Posterior cingulate gyrus (tissue), 11 donors: ENCODE measurements at regions of chr5 and their contacts with region 1.

Region 1: DNA sequence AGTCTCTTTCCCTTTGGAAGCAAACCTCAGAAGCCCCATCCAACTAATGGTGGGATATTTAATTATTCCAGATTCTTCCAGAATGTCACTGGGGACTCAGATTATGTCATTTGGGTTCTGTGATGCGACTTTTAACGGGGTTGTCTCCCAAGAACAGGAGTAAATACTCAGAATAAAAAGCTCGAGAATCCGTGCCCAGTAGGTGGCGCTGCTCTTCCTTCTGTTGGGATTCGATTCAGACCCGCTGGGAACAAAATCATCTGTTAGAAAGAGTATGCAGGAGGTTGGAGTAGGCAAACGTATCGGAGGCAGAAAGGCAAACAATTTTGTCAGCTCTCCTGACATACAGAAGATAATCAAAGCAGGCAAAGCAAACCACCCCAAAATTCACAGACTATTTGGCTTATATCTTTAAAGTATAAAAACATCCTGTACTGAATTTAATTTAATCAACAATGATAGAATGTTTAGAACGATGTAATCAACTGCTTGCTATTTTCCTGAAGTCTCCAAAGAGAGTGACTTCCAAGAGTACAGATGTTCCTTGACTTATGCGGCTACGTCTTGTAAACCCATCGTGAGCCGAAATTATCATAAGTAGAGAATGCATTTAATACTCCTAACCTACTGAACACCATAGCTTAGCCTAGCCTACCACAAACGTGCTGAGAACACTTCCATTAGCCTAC is 169.8 kb upstream of the RAI14 start:
- DNase-seq: peak; percentile 69 to 97 (median 88)

Region 2: GRCh38 chr5:34522599-34523386 is 36.5 kb after region 1 on chr5:
- intact Hi-C with region 1: loop called (anchors 2 kb)
- DNase-seq: peak in 9 of 10 donors; percentile 47 to 94 (median 75)